ENCODE measurements at regions of chr11 and their contacts with region 1.

Region 1: DNA sequence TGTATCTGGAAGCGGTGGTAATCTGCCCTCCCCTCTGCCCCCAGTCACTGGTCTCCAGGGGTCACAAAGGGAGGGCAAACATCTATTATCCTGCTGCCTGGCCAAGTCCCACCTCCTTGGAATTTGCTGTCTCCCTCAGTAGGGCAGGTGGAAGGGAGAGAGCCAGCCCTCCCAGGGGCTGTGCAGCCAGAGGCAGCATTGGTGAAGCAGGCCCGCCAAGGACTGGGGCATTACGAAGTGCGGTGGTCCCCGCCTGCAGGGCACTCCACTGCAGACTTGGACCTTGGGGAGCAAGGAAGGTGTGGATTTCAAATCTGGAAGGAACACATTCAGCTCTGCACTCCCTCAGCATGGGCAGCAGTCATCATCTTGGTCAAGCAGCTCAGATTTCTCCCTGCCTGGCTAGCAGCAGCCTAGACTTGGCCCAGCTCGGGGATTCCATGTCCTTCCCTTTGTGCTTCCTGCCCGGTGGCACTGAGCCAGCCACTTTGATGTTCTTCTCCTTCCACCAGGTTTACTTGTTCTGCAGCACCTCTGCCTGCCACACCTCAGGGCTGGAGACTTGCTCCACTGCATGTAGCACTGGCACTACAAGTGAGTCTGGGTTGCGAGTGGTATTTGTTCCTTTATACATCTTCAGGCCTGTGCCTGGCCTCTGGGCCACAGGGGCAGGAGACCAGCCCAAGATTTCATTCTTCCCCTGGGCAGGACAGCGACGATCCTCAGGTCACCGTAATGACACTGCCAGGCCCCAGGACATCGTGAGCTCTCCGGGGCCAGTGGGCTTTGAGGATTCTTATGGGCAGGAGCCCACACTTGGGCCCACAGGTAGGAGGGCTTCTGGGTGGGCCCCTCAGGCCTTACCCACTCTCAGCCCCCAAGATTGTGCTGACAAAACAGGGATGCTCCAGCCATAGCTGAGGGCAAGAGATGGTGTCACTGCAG is 7.4 kb downstream of the ZP1 start:
- DNase-seq: no peak
- ATAC-seq: no peak

Region 2: DNA sequence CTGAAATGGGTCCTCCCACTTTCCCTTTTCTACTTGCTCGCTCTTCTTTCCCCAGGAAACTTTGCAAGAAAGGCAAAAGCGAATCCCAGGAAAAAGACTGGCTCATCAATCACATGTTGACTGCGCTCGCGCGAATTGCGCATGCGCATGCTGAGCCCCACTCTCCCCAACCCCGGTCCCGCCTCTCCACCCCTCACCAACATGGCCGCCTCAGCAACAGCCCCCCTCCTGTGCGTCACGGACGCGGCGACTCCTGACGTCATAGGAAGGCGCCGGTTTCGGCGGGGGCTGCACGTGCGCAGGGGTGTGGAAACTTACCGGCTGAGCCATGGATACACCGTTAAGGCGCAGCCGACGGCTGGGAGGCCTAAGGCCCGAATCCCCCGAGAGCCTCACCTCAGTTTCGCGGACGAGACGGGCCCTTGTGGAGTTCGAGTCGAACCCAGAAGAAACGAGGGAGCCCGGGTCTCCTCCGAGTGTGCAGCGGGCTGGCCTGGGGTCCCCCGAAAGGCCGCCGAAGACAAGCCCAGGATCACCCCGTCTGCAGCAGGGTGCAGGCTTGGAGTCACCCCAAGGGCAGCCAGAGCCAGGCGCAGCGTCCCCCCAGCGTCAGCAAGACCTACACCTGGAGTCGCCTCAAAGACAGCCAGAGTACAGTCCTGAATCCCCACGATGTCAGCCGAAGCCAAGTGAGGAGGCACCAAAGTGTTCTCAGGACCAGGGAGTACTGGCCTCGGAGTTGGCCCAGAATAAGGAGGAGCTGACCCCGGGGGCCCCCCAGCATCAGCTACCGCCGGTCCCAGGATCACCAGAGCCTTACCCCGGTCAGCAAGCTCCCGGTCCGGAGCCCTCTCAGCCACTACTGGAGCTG is 32.7 kb before region 1 on chr11 and contains the start of gene CCDC86:
- intact Hi-C with region 1: loop called (anchors 5 kb)
- DNase-seq: peak; percentile 98
- ATAC-seq: peak; percentile 97
- total RNA-seq, gene CCDC86: 8.4 TPM